ENCODE measurements at regions of chr12 and their contacts with region 1.

Region 1: DNA sequence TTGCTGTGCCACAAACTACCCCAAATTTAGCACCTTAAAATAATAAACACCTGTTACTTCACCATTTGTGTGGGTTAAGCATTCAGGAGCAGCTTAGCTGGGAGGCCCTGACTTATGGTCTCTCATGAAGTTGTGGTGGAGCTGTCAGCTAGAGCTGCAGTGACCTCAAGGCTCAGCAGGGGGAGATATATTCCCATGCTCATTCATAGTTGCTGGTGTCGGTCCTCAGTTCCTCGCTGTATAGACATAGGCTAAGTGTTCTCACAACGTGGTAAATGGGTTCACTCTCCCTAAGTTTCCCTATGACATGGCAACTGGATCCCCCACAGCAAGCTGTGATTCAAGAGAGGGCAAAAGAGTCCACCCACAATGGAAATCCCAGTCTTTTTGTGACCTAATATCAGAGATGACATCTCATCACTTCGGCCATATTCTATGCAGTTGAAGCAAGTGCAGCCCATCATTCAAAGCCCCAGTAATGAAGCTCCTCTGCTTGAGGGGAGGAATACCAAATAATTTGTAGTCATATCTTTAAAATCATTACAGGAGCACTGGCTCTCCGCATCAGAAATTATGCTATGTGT is 41.1 kb downstream of the PRB3 start:
- DNase-seq: peak; percentile 39
- ATAC-seq: peak; percentile 83
- H3K4me3 ChIP-seq: no peak overlapping the region
- H3K27ac ChIP-seq: no peak overlapping the region
- H3K4me1 ChIP-seq: no peaks in the 10 kb centered on the region
- H3K27me3 ChIP-seq: no peaks in the 10 kb centered on the region; the same call in 1 of the 2 replicates
- CTCF ChIP-seq: peak; percentile 73

Region 2: GRCh38 chr12:11486623-11487444 is 258.4 kb after region 1 on chr12:
- CTCF ChIA-PET with region 1: no interaction called
- POLR2A ChIA-PET with region 1: no interaction called
- in situ Hi-C with region 1: no loop called
- intact Hi-C with region 1: loop called (anchors 5 kb)
- DNase-seq: peak; percentile 61
- ATAC-seq: peak; percentile 83
- H3K4me3 ChIP-seq: no peak overlapping the region; a peak in 1 of 4 replicates
- H3K27ac ChIP-seq: no peak overlapping the region
- H3K4me1 ChIP-seq: 0 out of 2 replicates have a peak, but pooled peaks cover 4% of the 10 kb centered on the region
- H3K27me3 ChIP-seq: 0 out of 2 replicates have a peak, but pooled peaks cover 1% of the 10 kb centered on the region
- CTCF ChIP-seq: peak; percentile 91

Measured in Panc1 (cell line).